Dendritic cell treated with granulocyte-macrophage colony-stimulating factor and Interleukin-4, amounts not matched to agents 40 ng/mL and 50 ng/mL, for 4 days (primary cell): ENCODE measurements at regions of chr3 and their contacts with region 1.

Region 1: GRCh38 chr3:45906681-45907407 is 20.5 kb downstream of the CCR9 start:
- H3K4me3 Mint-ChIP-seq: no peak overlapping the region
- H3K27ac Mint-ChIP-seq: no peak overlapping the region
- H3K4me1 Mint-ChIP-seq: peaks cover 5% of the 10 kb centered on the region
- H3K27me3 Mint-ChIP-seq: no peaks in the 10 kb centered on the region

Region 2: DNA sequence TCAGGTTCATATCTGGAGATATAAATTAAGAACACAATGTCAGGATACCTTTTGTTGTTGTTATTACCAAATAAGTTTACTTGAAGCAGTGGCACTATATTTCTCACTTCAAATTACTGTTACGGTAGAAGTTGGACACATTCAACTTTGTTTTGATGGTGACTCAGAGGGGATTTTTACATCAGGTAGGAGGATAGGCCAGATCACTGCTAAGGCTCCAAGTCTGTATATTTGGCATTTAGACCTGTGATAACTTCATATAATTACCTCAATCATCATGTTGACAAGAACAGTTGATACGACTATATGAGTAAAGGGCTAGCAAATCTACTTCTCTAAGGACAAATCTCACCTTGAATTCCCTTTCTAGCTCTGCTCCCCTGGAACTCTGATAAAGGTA is 80.5 kb before region 1 on chr3:
- intact Hi-C with region 1: loop called (anchors 10 kb)
- H3K4me3 Mint-ChIP-seq: no peak overlapping the region
- H3K27ac Mint-ChIP-seq: no peak overlapping the region
- H3K4me1 Mint-ChIP-seq: no peaks in the 10 kb centered on the region
- H3K27me3 Mint-ChIP-seq: no peaks in the 10 kb centered on the region